ENCODE measurements at regions of chr2 and their contacts with region 1.

Region 1: GRCh38 chr2:132547074-132547687 is 122.8 kb downstream of the LYPD1 start:
- DNase-seq: peak in 5 of 14 experiments; percentile 4 to 46 (median 22)
- ATAC-seq: no peak
- H3K4me3 ChIP-seq: no peak overlapping the region
- H3K4me3 Mint-ChIP-seq: no peak overlapping the region
- H3K27ac ChIP-seq: no peak overlapping the region
- H3K27ac Mint-ChIP-seq: no peak overlapping the region
- H3K4me1 ChIP-seq: no peaks in the 10 kb centered on the region
- H3K4me1 Mint-ChIP-seq: no peaks in the 10 kb centered on the region
- H3K27me3 ChIP-seq: no peaks in the 10 kb centered on the region
- H3K27me3 Mint-ChIP-seq: no peaks in the 10 kb centered on the region
- CTCF ChIP-seq: peak; percentile 20

Region 2: DNA sequence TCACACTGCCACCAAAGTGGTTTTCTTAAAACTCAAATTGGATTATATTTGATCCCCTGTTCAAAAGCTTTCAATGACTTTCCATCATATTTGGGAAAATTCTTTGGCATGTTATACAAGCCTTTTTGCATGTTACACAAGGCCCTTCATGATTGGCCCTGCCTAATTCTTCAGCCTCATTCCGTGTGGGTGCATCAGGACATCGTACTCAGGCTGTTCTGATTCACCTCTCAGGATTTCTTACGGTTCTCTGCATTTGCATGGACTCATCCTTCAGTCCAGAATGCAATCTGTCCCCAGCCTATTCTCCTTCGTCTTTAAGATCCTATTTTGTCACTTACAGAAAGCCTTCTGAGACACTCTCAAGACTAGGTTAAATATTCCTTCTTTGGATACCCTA is 15.1 kb after region 1 on chr2:
- CTCF ChIA-PET with region 1: no interaction called
- POLR2A ChIA-PET with region 1: no interaction called
- intact Hi-C with region 1: no loop called
- DNase-seq: no peak
- ATAC-seq: no peak
- H3K4me3 ChIP-seq: no peak overlapping the region
- H3K4me3 Mint-ChIP-seq: no peak overlapping the region
- H3K27ac ChIP-seq: no peak overlapping the region
- H3K27ac Mint-ChIP-seq: no peak overlapping the region
- H3K4me1 ChIP-seq: no peaks in the 10 kb centered on the region
- H3K4me1 Mint-ChIP-seq: no peaks in the 10 kb centered on the region
- H3K27me3 ChIP-seq: no peaks in the 10 kb centered on the region
- H3K27me3 Mint-ChIP-seq: no peaks in the 10 kb centered on the region
- CTCF ChIP-seq: no peak

Region 3: GRCh38 chr2:133780099-133780839 is 1233.1 kb after region 1 on chr2:
- CTCF ChIA-PET with region 1: no interaction called
- POLR2A ChIA-PET with region 1: no interaction called
- intact Hi-C with region 1: loop called in 1 of 2 experiments (anchors 10 kb)
- DNase-seq: peak in 3 of 14 experiments; percentile 11 to 18 (median 18)
- ATAC-seq: no peak
- H3K4me3 ChIP-seq: no peak overlapping the region
- H3K4me3 Mint-ChIP-seq: no peak overlapping the region
- H3K27ac ChIP-seq: no peak overlapping the region
- H3K27ac Mint-ChIP-seq: no peak overlapping the region
- H3K4me1 ChIP-seq: no peaks in the 10 kb centered on the region
- H3K4me1 Mint-ChIP-seq: no peaks in the 10 kb centered on the region
- H3K27me3 ChIP-seq: no peaks in the 10 kb centered on the region
- H3K27me3 Mint-ChIP-seq: no peaks in the 10 kb centered on the region
- CTCF ChIP-seq: peak; percentile 23

Measured in CD4-positive, alpha-beta T cell (primary cell).